ENCODE measurements at regions of chr19 and their contacts with region 1.

Region 1: DNA sequence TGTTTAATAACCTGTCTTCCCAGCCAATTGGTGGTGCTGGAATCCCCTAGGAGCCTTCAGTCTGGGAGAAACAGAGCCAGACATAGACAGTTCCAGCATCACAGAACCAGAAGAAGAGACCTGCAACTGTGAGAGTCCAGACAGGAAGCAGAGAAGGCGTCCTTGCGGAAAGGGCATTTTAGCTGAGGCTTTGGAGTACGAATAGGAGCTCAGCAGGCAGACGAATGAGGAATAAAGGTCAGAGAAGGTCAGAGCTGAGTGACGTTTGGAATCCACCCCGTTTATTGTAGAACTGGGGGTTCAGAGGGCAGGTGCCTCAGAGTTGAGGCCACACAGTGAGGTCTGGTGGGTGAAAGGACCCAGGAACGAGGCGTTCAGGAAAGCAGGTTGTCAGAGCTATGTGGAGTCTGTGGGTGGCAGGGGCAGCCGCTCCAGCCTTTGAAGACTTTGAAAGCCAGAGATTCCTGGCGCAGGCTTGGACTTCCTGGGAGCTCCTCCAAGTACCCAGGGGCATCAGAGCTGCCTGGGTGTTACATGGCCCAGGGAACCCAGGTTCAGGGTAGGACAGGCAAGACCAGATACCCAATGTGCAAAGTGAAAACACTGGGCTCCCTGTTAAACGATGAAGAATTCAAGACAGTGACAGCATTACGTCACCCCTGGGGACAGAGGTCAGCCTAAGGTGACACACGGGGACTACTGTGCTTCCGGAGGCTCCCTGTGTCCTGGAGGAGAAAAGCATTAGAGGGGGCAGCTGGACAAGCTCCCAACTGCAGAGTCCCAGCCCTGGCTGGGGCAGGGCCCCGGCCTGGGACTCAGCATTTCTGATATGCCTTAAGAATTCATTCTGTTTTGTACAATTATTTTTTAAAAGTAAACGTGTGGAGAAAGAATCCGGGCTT is 5.5 kb downstream of the ARRDC2 start:
- DNase-seq: no peak
- H3K4me3 ChIP-seq: no peak overlapping the region
- H3K4me3 Mint-ChIP-seq: peak overlapping the region in 7 of 8 donors; percentile 23 to 88 (median 81)
- H3K27ac ChIP-seq: peak overlapping the region; percentile 42
- H3K27ac Mint-ChIP-seq: peak overlapping the region; percentile 94 to 99 (median 97)
- H3K4me1 ChIP-seq: peaks cover 77% of the 10 kb centered on the region
- H3K4me1 Mint-ChIP-seq: peaks cover 31 to 68% (median 53%) of the 10 kb centered on the region in 4 donors
- H3K27me3 ChIP-seq: no peaks in the 10 kb centered on the region
- H3K27me3 Mint-ChIP-seq: no peaks in the 10 kb centered on the region

Region 2: DNA sequence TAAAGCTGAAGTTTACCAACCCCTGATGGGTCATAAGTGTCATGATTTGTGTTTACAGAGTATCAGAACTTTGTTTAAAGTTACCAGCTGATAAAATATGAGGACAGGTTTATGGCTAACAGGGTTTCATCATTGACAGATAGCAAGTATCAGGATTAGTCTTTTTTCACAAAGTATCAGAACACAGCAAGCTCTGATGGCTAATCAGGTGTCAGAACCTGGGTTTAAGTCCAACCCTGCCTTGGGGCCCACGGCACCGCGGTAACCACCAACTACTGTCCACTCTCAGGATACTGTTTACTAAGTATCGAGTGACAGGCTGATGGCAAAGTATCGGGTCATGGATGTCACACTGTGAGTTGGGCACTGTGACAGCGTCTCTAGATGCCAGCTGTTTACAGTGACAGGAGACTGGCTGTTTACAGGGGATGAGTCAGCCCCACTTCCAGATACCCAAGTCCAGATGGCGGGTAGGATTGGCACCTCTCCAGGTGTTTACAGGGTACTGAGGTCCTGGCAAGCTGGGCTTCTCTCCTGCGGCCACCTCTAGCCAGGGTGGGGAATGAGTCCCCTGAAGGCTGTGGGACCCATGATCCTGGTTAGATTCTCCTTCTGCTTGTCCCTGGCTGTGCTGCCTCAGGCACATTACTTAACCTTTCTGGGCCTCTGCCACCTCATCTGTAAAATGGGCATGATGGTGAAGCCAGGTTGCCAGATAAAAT is 16.3 kb after region 1 on chr19:
- CTCF ChIA-PET with region 1: interaction called, 3 read pairs
- POLR2A ChIA-PET with region 1: interaction called, 135 read pairs
- intact Hi-C with region 1: no loop called
- DNase-seq: no peak
- H3K4me3 ChIP-seq: no peak overlapping the region
- H3K4me3 Mint-ChIP-seq: no peak overlapping the region
- H3K27ac ChIP-seq: no peak overlapping the region
- H3K27ac Mint-ChIP-seq: peak overlapping the region in 1 of 7 donors; percentile 63
- H3K4me1 ChIP-seq: peaks cover 2% of the 10 kb centered on the region
- H3K4me1 Mint-ChIP-seq: peaks cover 9 to 22% (median 15%) of the 10 kb centered on the region in 4 donors
- H3K27me3 ChIP-seq: no peaks in the 10 kb centered on the region
- H3K27me3 Mint-ChIP-seq: no peaks in the 10 kb centered on the region